HEK293 (cell line): ENCODE measurements at regions of chr17 and their contacts with region 1.

Region 1: GRCh38 chr17:46199379-46199778 is 6.2 kb upstream of the KANSL1 start:
- H3K4me3 ChIP-seq: no peak overlapping the region
- H3K27ac ChIP-seq: no peak overlapping the region
- H3K4me1 ChIP-seq: peaks cover 13% of the 10 kb centered on the region
- CTCF ChIP-seq: no peak

Region 2: DNA sequence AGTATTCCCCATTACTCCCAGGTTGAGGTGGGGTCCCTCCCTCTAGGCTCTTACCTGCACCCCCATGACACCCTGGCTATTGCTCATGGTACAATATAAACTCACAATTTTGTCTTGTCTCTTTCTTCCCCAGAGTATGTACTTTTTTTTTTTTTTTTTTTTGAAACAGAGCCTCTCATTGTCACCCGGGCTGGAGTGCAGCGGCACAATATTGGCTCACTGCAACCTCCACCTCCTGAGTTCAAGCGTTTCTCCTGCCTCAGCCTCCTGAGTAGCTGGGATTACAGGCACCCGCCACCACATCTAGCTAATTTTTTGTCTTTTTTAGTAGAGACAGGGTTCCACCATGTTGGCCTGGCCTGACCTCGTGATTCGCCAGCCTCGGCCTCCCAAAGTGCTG is 14.7 kb before region 1 on chr17:
- CTCF ChIA-PET with region 1: no interaction called
- POLR2A ChIA-PET with region 1: no interaction called
- H3K4me3 ChIP-seq: no peak overlapping the region
- H3K27ac ChIP-seq: no peak overlapping the region
- H3K4me1 ChIP-seq: peaks cover 45% of the 10 kb centered on the region
- CTCF ChIP-seq: no peak

Region 3: GRCh38 chr17:46212634-46213435 is 13.5 kb after region 1 on chr17:
- CTCF ChIA-PET with region 1: interaction called, 96 read pairs
- POLR2A ChIA-PET with region 1: interaction called, 4 read pairs
- H3K4me3 ChIP-seq: no peak overlapping the region
- H3K27ac ChIP-seq: no peak overlapping the region
- H3K4me1 ChIP-seq: no peaks in the 10 kb centered on the region
- CTCF ChIP-seq: peak; percentile 79